ENCODE measurements at regions of chr4 and their contacts with region 1.

Region 1: DNA sequence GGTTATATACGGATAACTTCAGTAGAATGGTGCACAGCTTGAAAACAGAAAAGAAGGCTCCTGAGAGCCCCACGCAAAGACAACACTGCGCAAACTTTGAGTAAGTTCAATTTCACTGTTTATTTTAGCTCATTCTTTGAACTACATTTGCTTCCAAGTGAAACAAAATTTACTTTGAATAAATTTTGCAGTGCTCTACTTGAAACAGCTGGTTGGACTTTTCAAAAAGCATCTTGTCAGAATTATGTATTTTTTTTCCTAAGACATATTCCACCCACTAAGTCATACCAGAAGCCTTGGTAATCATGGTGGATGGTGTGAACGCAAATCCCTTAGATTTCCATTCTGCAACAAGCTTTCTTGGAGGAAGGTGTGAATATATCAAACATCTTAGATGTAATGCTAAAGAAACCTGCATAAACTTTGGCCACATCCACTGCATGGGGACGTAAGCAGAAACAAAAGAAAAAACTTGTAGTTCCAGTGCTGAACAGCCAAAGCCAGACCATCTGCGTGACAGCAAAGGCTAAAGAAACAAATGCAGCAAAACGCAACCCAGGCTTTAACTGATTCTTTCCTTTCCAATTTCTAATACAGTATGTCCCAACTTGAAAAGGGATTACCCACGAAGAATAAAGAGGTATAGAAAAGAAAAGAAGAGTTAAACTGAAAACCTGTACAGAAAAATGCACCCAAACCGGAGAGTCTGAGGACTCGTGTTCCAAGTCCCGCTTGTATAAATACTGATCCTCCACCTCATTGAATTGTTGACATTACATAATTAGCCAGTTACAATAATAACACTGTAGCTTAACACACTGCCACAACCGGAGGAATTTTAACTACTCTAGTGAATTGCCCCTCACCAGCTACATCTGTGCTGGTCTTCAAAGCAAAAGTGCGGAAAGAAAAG is 90.9 kb downstream of the SH3RF1 start:
- DNase-seq: no peak
- ATAC-seq: no peak
- H3K4me3 ChIP-seq: no peak overlapping the region
- H3K4me3 Mint-ChIP-seq: no peak overlapping the region
- H3K27ac ChIP-seq: no peak overlapping the region
- H3K27ac Mint-ChIP-seq: no peak overlapping the region
- H3K4me1 ChIP-seq: no peaks in the 10 kb centered on the region
- H3K4me1 Mint-ChIP-seq: no peaks in the 10 kb centered on the region
- H3K27me3 ChIP-seq: peaks cover 0 to 4% of the 10 kb centered on the region in 2 experiments
- H3K27me3 Mint-ChIP-seq: peaks cover 11% of the 10 kb centered on the region in 2 donors

Region 2: DNA sequence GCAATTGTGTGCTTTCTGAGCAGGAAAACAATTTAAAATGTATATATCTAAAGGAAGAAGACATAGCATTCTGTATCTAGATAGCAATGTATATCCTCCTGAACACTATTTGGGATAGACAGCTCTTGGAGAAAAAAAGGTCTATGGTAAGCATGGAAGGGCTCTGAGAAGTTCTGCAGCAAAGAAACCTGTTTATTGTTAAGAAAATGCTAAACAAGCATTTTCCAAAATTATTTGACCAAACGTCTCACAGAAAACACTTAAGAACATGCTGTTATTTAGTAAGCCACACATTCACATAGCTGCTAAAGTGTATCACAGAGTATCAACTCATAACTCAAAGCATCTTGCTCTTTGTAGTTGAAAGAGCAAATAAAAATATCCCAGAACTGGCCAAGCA is 23.0 kb after region 1 on chr4:
- CTCF ChIA-PET with region 1: no interaction called
- POLR2A ChIA-PET with region 1: interaction called in 1 of 2 experiments, 17 read pairs
- DNase-seq: no peak
- ATAC-seq: no peak
- H3K4me3 ChIP-seq: no peak overlapping the region
- H3K4me3 Mint-ChIP-seq: no peak overlapping the region
- H3K27ac ChIP-seq: no peak overlapping the region
- H3K27ac Mint-ChIP-seq: no peak overlapping the region
- H3K4me1 ChIP-seq: no peaks in the 10 kb centered on the region
- H3K4me1 Mint-ChIP-seq: no peaks in the 10 kb centered on the region
- H3K27me3 ChIP-seq: no peaks in the 10 kb centered on the region
- H3K27me3 Mint-ChIP-seq: peaks cover 0 to 5% of the 10 kb centered on the region in 2 donors